ENCODE measurements at regions of chr9 and their contacts with region 1.

Region 1: DNA sequence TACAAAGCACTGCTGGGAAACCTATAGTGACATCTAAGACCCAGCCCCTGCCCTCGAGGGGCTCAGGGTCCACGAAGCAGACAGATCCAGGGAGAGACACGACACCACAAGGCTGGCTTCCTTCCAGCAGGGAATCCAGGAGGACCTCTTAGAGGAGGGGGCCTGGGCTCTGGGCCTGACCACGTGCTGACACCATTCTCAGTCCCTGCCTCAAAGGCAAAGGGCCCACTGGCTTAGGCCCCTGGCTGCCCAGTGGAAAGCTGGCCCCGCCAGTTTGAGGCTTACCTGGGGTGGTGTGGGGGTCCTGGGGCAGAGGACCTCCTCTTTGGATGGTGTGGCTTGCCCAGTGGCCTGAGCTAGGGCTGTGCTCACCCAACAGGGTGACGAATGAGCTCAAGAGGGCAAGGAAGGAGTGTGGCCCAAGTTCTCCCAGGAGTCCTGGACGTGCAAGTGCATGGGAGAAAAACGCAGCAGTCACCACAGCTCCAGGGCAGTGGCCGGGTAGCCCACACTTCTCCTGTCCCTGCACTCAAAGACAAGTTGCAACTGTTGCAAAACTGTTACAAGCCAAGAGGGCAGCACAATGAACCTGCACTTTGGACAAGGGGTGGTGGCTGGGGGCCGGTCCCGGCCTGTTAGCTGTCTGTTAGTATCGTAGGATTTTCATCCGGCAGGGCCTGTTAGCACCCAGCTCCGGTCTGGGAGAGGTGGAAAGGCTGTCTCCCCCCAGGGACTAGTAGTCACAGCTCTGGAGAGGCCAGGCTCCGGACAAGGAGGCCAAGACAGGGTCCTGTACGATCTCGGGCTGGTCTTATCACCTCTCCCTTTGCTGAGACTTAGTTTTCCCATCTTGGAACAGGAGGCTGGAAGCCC is 1.5 kb upstream of the SARDH start:
- DNase-seq: peak in 1 of 2 donors; percentile 56
- H3K4me3 ChIP-seq: no peak overlapping the region
- H3K27ac ChIP-seq: no peak overlapping the region
- H3K4me1 ChIP-seq: peaks cover 0 to 18% (median 0%) of the 10 kb centered on the region in 4 donors
- H3K27me3 ChIP-seq: peaks cover 0 to 41% of the 10 kb centered on the region in 2 donors
- CTCF ChIP-seq: no peak

Region 2: GRCh38 chr9:133532937-133533668 is 206.5 kb before region 1 on chr9:
- intact Hi-C with region 1: loop called (anchors 1 kb)
- DNase-seq: peak in 1 of 2 donors; percentile 48
- H3K4me3 ChIP-seq: no peak overlapping the region
- H3K27ac ChIP-seq: no peak overlapping the region
- H3K4me1 ChIP-seq: peaks cover 0 to 21% (median 17%) of the 10 kb centered on the region in 4 donors
- H3K27me3 ChIP-seq: peaks cover 0 to 95% of the 10 kb centered on the region in 2 donors
- CTCF ChIP-seq: peak; percentile 24 to 44

Region 3: GRCh38 chr9:133589454-133590227 is 150.0 kb before region 1 on chr9:
- intact Hi-C with region 1: no loop called
- DNase-seq: no peak
- H3K4me3 ChIP-seq: no peak overlapping the region
- H3K27ac ChIP-seq: no peak overlapping the region
- H3K4me1 ChIP-seq: peaks cover 0 to 15% (median 12%) of the 10 kb centered on the region in 4 donors
- H3K27me3 ChIP-seq: peaks cover 0 to 78% of the 10 kb centered on the region in 2 donors
- CTCF ChIP-seq: no peak